ENCODE measurements at regions of chr5 and their contacts with region 1.

Region 1: GRCh38 chr5:118628660-118629354 is 359.5 kb downstream of the DTWD2 start:
- DNase-seq: no peak
- H3K4me3 ChIP-seq: no peak overlapping the region
- H3K4me3 Mint-ChIP-seq: no peak overlapping the region
- H3K27ac Mint-ChIP-seq: no peak overlapping the region
- H3K4me1 ChIP-seq: 0 out of 2 replicates have a peak, but pooled peaks cover 4% of the 10 kb centered on the region
- H3K4me1 Mint-ChIP-seq: peaks cover 7% of the 10 kb centered on the region
- H3K27me3 ChIP-seq: no peaks in the 10 kb centered on the region
- H3K27me3 Mint-ChIP-seq: no peaks in the 10 kb centered on the region
- CTCF ChIP-seq: no peak

Region 2: GRCh38 chr5:118647587-118647986 is 18.8 kb after region 1 on chr5:
- CTCF ChIA-PET with region 1: no interaction called
- POLR2A ChIA-PET with region 1: no interaction called
- intact Hi-C with region 1: loop called (anchors 1 kb)
- DNase-seq: peak; percentile 49 to 68
- H3K4me3 ChIP-seq: no peak overlapping the region
- H3K4me3 Mint-ChIP-seq: peak overlapping the region; percentile 56
- H3K27ac Mint-ChIP-seq: peak overlapping the region; percentile 76
- H3K4me1 ChIP-seq: peaks cover 27% of the 10 kb centered on the region
- H3K4me1 Mint-ChIP-seq: peaks cover 7% of the 10 kb centered on the region
- H3K27me3 ChIP-seq: no peaks in the 10 kb centered on the region
- H3K27me3 Mint-ChIP-seq: no peaks in the 10 kb centered on the region
- CTCF ChIP-seq: no peak

Measured in Caco-2 (cell line).